ENCODE measurements at regions of chr7 and their contacts with region 1.

Region 1: GRCh38 chr7:150448789-150449147 is 1.7 kb upstream of the GIMAP8 start:
- DNase-seq: peak; percentile 80
- H3K4me3 ChIP-seq: peak overlapping the region; percentile 70
- H3K27ac ChIP-seq: peak overlapping the region; percentile 92
- H3K4me1 ChIP-seq: peaks cover 55% of the 10 kb centered on the region
- H3K27me3 ChIP-seq: no peaks in the 10 kb centered on the region
- CTCF ChIP-seq: peak; percentile 95

Region 2: GRCh38 chr7:150567169-150567568 is 118.4 kb after region 1 on chr7 and contains the start of gene GIMAP4:
- intact Hi-C with region 1: loop called (anchors 5 kb)
- DNase-seq: no peak
- H3K4me3 ChIP-seq: peak within 1 kb of the TSS; percentile 70
- H3K27ac ChIP-seq: peak within 1 kb of the TSS; percentile 89
- H3K4me1 ChIP-seq: peaks cover 35% of the 10 kb centered on the region
- H3K27me3 ChIP-seq: no peaks in the 10 kb centered on the region
- CTCF ChIP-seq: no peak
- total RNA-seq, gene GIMAP4: 31.2 TPM

Region 3: DNA sequence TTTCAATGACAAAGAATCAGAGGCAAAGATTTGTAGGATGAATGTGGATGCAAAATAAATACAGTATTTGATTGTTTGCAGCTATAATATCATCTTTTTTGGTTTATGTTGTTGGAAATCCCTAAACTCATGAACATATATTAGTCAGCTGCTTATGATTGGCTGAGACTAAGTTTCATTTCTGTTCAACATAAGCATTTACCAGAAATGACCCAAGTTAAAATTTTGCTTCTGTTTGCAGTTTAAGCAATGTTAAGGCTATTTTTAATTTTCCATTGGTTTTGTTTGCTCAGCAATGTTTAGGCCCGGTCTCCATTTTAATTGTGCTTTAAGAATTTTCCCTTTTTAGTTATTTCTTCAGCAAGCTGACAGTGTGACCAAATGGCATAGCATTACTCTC is 161.5 kb after region 1 on chr7:
- intact Hi-C with region 1: no loop called
- DNase-seq: no peak
- H3K4me3 ChIP-seq: no peak overlapping the region
- H3K27ac ChIP-seq: peak overlapping the region; percentile 50
- H3K4me1 ChIP-seq: no peaks in the 10 kb centered on the region
- H3K27me3 ChIP-seq: no peaks in the 10 kb centered on the region
- CTCF ChIP-seq: no peak

Region 4: GRCh38 chr7:150716368-150716767 is 267.6 kb after region 1 on chr7 and contains the start of gene GIMAP1:
- intact Hi-C with region 1: no loop called
- DNase-seq: peak; percentile 47
- H3K4me3 ChIP-seq: peak within 1 kb of the TSS; percentile 69
- H3K27ac ChIP-seq: peak within 1 kb of the TSS; percentile 91
- H3K4me1 ChIP-seq: peaks cover 24% of the 10 kb centered on the region
- H3K27me3 ChIP-seq: no peaks in the 10 kb centered on the region
- CTCF ChIP-seq: no peak
- total RNA-seq, gene GIMAP1: 5.9 TPM

Region 5: GRCh38 chr7:150756858-150757257 is 308.1 kb after region 1 on chr7:
- intact Hi-C with region 1: loop called (anchors 2 kb)
- DNase-seq: no peak
- H3K4me3 ChIP-seq: no peak overlapping the region
- H3K27ac ChIP-seq: peak overlapping the region; percentile 83
- H3K4me1 ChIP-seq: peaks cover 47% of the 10 kb centered on the region
- H3K27me3 ChIP-seq: no peaks in the 10 kb centered on the region
- CTCF ChIP-seq: peak; percentile 73